Calu3 (cell line): ENCODE measurements at regions of chr19 and their contacts with region 1.

Region 1: GRCh38 chr19:13846557-13847406 is 30.2 kb upstream of the NANOS3 start:
- DNase-seq: peak; percentile 96
- H3K4me3 Mint-ChIP-seq: peak overlapping the region; percentile 60
- H3K27ac Mint-ChIP-seq: peak overlapping the region; percentile 98
- H3K4me1 Mint-ChIP-seq: peaks cover 31% of the 10 kb centered on the region
- H3K27me3 Mint-ChIP-seq: no peaks in the 10 kb centered on the region
- CTCF ChIP-seq: no peak

Region 2: GRCh38 chr19:13774217-13775191 is 72.3 kb before region 1 on chr19 and contains the start of gene C19orf53:
- CTCF ChIA-PET with region 1: interaction called, 13 read pairs
- intact Hi-C with region 1: no loop called
- DNase-seq: peak; percentile 83
- H3K4me3 Mint-ChIP-seq: peak within 1 kb of the TSS; percentile 99
- H3K27ac Mint-ChIP-seq: peak within 1 kb of the TSS; percentile 95
- H3K4me1 Mint-ChIP-seq: no peaks in the 10 kb centered on the region
- H3K27me3 Mint-ChIP-seq: no peaks in the 10 kb centered on the region
- CTCF ChIP-seq: no peak
- total RNA-seq, gene C19orf53: 59.4 and 66.4 TPM in 2 replicates

Region 3: DNA sequence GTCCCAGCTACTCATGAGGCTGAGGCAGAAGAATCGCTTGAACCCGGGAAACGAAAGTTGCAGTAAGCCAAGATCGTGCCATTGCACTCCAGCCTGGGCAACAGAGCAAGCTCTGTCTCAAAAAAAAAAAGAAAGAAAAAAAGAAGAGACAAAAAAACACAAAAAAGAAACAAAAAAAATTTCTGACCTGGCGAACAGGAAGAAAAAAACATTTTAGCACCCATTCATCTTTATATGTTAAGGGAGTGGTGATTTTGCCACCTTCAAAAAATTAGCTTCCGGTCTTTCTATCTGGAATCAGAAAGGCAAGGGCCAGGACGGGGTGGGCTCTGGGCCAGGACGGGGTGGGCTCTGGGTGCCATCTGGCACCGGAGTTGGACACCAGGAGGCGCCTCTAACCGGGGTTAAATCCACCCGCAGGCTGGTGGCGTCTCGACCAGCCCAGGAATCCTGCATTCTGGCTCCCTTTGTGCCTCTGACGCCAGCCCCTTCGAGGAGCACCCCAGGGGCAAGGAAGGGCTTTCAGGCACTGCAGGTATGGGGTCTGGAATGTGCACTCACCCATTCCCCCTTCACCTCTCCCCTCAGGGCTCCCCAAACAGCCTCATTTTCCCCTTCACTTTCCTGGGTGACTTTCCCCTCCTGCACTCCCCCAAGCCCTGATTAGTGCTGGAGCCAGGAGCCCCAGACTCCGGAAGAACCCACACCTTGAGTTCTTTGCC is 61.9 kb before region 1 on chr19:
- CTCF ChIA-PET with region 1: no interaction called
- intact Hi-C with region 1: no loop called
- DNase-seq: peak; percentile 76
- H3K4me3 Mint-ChIP-seq: peak overlapping the region; percentile 34
- H3K27ac Mint-ChIP-seq: peak overlapping the region; percentile 77
- H3K4me1 Mint-ChIP-seq: peaks cover 16% of the 10 kb centered on the region
- H3K27me3 Mint-ChIP-seq: no peaks in the 10 kb centered on the region
- CTCF ChIP-seq: peak; percentile 53